MCF 10A (cell line): ENCODE measurements at regions of chr11 and their contacts with region 1.

Region 1: GRCh38 chr11:47426061-47426956 is at the start of gene PSMC3:
- DNase-seq: peak; percentile 98
- H3K4me3 Mint-ChIP-seq: peak within 1 kb of the TSS; percentile 98
- H3K27ac Mint-ChIP-seq: peak within 1 kb of the TSS; percentile 100
- H3K4me1 Mint-ChIP-seq: peaks cover 17% of the 10 kb centered on the region
- H3K27me3 Mint-ChIP-seq: no peaks in the 10 kb centered on the region
- CTCF ChIP-seq: no peak
- total RNA-seq, gene PSMC3: 162 and 194 TPM in 2 replicates

Region 2: DNA sequence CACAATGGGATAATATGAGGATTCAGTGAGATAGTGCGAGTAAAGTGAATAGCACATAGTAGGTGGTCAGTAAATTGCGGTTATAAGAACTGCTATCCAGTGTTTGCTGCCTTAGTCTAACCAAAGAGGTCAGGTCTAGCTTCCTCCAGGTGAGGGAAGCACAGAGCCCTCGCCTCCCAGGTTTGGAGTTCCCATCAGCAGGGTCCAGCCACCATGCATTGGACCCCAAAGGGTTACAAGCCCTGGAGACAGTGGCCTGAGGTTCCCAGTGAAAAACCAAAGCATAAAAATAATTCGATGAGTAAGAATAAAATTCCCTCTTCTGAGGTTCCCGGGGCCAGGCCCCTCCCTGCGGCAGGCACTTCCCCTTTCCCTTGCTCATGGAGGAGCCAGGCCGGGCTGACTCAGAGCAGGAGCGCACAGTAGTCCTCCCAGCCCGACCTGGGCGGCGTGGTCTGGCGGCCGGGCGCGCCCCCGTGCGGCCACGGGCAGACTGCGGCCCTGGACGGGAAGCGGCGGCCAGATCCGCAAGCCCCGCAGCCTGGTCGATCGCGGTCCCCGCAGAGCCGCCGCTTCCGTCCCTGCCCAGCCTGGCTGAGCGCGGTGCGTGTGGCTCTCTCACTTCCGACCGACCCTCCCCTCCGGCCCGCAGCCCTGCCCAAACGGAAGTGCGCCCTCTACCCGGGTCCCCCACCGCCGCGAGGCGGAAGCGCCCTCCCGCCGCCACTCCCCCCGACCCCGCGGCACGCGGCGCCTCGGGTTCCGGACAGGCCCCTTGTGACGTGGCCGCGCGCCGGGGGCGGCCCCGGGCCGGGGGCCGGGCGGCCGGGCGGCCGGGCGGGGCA is 18.3 kb before region 1 on chr11 and contains the start of gene SLC39A13:
- CTCF ChIA-PET with region 1: interaction called, 9 read pairs
- POLR2A ChIA-PET with region 1: interaction called, 75 read pairs
- intact Hi-C with region 1: no loop called
- DNase-seq: peak; percentile 91
- H3K4me3 Mint-ChIP-seq: peak within 1 kb of the TSS; percentile 93
- H3K27ac Mint-ChIP-seq: peak within 1 kb of the TSS; percentile 98
- H3K4me1 Mint-ChIP-seq: peaks cover 24% of the 10 kb centered on the region
- H3K27me3 Mint-ChIP-seq: no peaks in the 10 kb centered on the region
- CTCF ChIP-seq: peak; percentile 79
- total RNA-seq, gene SLC39A13: 56.2 and 56.5 TPM in 2 replicates

Region 3: GRCh38 chr11:47415949-47416472 is 10.3 kb before region 1 on chr11:
- CTCF ChIA-PET with region 1: interaction called, 9 read pairs
- POLR2A ChIA-PET with region 1: interaction called, 75 read pairs
- intact Hi-C with region 1: no loop called
- DNase-seq: peak; percentile 92
- H3K4me3 Mint-ChIP-seq: peak overlapping the region; percentile 23
- H3K27ac Mint-ChIP-seq: peak overlapping the region; percentile 73
- H3K4me1 Mint-ChIP-seq: peaks cover 21% of the 10 kb centered on the region
- H3K27me3 Mint-ChIP-seq: no peaks in the 10 kb centered on the region
- CTCF ChIP-seq: no peak

Region 4: GRCh38 chr11:47565340-47566148 is 139.2 kb after region 1 on chr11 and contains the start of gene PTPMT1:
- CTCF ChIA-PET with region 1: interaction called, 6 read pairs
- POLR2A ChIA-PET with region 1: interaction called, 11 read pairs
- intact Hi-C with region 1: no loop called
- DNase-seq: peak; percentile 50
- H3K4me3 Mint-ChIP-seq: peak within 1 kb of the TSS; percentile 73
- H3K27ac Mint-ChIP-seq: no peak within 1 kb of the TSS
- H3K4me1 Mint-ChIP-seq: peaks cover under 1% of the 10 kb centered on the region
- H3K27me3 Mint-ChIP-seq: no peaks in the 10 kb centered on the region
- CTCF ChIP-seq: no peak
- total RNA-seq, gene PTPMT1: 44.6 and 49.0 TPM in 2 replicates